ENCODE measurements at regions of chr9 and their contacts with region 1.

Region 1: DNA sequence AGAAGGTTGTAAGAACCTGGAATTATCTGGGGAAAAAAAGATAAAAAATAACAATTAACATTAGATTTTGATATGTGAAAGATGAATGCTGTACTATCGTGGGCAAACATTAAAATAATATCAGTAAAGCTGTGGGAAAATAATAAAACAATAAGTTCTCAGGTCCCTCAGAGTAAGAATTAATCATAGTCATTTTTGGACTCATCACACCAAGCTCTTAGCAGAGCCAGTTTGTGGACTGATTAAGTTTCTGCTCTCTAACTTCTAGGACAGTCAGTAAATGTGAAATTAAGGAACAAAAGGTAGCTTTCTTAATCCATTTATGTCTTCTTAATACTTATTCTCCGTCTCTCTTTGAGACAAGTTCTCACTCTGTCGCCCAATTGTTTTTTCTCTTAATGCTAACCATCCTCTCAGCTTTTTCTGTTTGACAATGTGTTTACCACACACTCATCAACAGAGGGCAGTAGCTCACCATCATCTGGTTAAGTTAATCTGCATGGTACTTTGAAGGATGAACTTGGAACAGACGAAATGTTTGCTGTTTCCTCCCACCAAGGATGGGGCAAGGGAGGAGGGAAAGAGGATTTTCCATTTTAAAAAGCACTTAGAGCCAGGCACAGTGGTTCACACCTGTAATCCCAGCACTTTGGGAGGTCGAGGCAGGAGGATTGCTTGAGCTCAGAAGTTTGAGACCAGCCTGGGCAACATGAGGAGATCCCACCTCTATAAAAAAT is 5.3 kb upstream of the ACO1 start:
- DNase-seq: peak; percentile 77
- H3K27ac ChIP-seq: no peak overlapping the region
- CTCF ChIP-seq: peak; percentile 87

Region 2: GRCh38 chr9:32431940-32432555 is 52.9 kb after region 1 on chr9:
- CTCF ChIA-PET with region 1: interaction called, 27 read pairs
- POLR2A ChIA-PET with region 1: no interaction called
- DNase-seq: peak; percentile 31
- H3K27ac ChIP-seq: no peak overlapping the region
- CTCF ChIP-seq: peak; percentile 72

Region 3: DNA sequence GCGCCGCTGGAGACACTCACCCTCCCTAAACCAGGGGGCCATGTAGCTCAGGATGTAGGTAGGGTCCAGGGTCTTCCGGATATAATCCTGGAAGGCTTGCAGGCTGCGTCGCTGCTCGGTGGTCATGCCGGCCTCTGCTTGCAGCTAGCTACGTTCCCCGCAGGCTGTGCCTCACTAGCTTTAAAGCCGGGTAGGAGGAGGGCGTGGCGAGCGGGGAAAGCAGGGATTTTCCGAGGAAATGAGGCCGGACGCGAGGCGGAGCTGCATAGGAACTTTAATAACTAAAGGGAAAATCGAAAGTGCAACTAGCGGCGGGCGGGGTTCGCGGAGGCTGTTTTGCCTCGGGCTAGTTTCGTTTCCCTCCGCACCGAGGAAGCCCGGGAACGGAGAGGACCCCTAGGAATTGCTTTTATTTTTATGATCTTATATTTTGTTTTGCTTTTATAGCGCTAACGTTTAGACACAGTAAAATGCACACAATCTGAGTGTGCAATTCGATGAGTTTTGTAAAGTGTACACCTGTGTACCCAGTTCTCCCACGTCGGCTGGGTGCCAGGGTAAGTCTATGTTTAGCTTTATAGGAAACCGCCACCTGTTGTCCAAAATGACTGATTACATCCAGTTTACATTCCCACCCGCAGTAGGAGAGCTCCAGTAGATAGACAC is 147.0 kb after region 1 on chr9 and contains the start of gene RIGI:
- CTCF ChIA-PET with region 1: interaction called, 11 read pairs
- POLR2A ChIA-PET with region 1: interaction called, 3 read pairs
- DNase-seq: peak; percentile 89
- H3K27ac ChIP-seq: peak within 1 kb of the TSS; percentile 81
- CTCF ChIP-seq: peak; percentile 93

Region 4: DNA sequence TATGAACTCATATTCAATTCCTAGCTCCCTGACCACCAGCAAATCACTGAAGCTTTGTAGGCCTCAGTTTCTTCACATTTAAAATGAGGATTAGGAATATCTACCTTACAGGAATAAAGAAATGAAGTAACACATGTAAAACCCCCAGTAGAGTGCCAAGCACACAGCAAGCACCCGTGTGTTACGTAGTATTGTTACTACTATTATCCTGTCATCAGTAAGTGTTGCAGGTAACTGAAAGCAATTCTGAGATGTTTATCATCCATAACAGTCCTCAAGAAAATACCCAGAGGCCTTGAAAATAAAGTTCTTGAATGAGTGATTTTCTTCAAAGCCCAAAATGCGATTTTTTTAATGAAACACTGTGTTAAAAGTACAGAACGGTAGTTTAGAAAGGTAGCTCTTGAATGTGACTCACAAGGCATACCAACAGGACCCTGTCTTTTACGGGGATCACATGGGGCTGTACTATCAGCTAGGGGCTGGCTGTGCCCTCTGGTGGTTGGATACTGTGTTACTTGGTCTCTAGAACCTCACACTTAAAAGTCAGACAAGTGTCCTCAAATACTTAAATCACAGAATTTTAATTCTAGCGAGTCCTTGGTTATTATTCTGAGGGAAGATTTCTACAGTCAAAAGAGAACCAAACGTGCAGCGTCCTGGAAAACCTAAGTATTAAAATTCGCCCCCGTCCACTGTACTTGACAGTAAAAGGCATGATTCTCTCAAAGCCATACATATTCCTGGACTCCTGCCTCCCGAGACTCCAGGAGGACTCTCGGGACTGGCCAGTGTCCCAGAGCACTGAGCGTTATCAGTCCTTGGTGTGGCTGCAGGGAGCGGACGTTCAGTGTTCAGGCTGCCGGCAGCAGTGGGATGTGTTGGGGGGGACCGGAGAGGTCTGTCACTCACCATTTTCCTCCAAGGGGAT is 193.1 kb after region 1 on chr9:
- CTCF ChIA-PET with region 1: interaction called, 135 read pairs
- POLR2A ChIA-PET with region 1: no interaction called
- DNase-seq: peak; percentile 94
- H3K27ac ChIP-seq: peak overlapping the region; percentile 92
- CTCF ChIP-seq: peak; percentile 96

Region 5: DNA sequence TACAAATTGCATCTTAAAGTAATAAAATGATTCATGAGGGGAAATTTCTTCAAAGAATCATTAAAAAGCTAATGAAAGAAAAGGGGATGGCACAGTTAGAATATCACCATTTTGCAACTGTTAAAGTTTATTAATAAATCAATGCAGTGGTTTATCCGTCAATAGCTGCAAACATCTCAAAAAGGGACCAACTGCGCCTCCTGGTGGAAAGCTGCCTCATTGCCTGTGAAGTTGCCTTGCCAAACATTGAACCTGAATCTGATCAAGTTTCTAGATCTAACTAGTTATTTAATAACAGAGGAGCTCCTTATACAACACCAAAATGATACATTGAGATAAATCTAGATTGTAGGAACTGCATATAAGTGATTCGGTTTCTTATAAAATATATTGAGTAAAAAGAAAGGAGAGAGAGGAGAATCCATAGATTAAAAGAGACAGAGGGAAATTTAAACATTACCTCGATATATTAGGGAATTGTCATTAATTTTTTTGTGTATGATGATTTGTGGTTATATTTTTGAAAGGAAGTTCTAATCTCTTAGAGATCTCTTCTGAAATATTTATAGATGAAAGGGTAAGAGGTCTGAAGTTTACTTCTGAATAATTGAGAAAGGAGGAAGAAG is 200.7 kb after region 1 on chr9:
- CTCF ChIA-PET with region 1: interaction called, 135 read pairs
- POLR2A ChIA-PET with region 1: no interaction called
- DNase-seq: peak; percentile 51
- H3K27ac ChIP-seq: no peak overlapping the region
- CTCF ChIP-seq: peak; percentile 99

Region 6: DNA sequence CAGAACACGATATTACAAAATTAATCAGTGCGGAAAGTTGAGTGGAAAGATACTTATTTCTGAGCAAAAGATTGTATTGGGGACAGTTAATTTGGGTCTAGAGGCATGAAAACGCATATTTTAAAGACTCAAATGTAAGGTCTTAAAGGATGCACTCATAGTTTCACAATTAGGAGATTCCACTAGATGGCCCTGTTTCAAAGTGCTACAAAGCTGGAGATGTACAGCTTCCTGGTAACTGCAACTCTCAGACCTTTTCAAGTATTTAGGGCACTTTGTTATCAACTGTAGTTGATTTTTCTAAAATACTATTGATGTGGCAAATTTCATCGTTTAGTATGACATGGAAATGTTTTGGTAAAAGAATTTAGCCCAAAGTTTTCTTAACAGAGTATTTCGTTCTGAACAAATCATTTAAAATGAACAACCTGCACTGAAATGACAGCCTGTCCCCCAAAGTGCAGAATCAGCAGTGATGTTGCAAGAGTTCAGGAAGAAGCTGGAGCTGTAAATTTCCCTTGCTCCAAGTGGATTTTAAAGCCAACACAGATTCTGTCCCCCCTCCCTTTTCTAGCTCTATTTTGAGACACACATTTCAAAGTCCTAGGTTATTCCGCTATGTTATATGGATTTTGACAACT is 210.0 kb after region 1 on chr9:
- CTCF ChIA-PET with region 1: interaction called, 17 read pairs
- POLR2A ChIA-PET with region 1: no interaction called
- DNase-seq: peak; percentile 59
- H3K27ac ChIP-seq: no peak overlapping the region
- CTCF ChIP-seq: peak; percentile 83

Region 7: GRCh38 chr9:32644698-32645097 is 265.5 kb after region 1 on chr9:
- CTCF ChIA-PET with region 1: no interaction called
- POLR2A ChIA-PET with region 1: no interaction called
- DNase-seq: peak; percentile 87
- H3K27ac ChIP-seq: peak overlapping the region; percentile 66
- CTCF ChIP-seq: no peak

Region 8: DNA sequence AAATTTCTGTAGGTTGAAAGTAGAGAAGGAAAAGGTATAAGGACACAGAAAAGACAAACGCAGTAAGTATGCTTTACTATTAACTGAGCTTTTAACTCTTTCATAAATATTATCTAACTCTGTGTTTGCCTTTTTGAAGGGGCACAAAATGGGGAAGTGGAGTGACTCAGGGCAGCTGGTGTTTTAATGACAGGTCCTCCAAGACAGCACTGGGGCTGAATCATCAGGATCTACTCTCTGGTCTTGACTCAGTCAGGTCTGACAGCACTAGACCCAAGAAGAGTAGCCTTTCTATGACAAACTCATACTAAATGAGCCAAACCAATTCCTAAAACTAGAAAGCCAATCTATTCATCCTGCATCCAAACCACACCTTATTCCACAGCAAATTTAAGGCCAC is 520.0 kb after region 1 on chr9:
- CTCF ChIA-PET with region 1: no interaction called
- POLR2A ChIA-PET with region 1: no interaction called
- DNase-seq: no peak
- H3K27ac ChIP-seq: no peak overlapping the region
- CTCF ChIP-seq: no peak

Measured in RWPE1 (cell line).